ENCODE measurements at regions of chr2 and their contacts with region 1.

Region 1: GRCh38 chr2:64819774-64820696 is 166.3 kb upstream of the SERTAD2 start:
- DNase-seq: no peak
- ATAC-seq: peak in 1 of 8 donors; percentile 44
- H3K4me3 ChIP-seq: no peak overlapping the region
- H3K27ac ChIP-seq: peak overlapping the region in 4 of 10 donors; percentile 3 to 81 (median 20)
- H3K4me1 ChIP-seq: peaks cover 0 to 17% (median 0%) of the 10 kb centered on the region in 9 donors
- H3K27me3 ChIP-seq: peaks cover 0 to 6% (median 0%) of the 10 kb centered on the region in 7 donors
- CTCF ChIP-seq: no peak

Region 2: GRCh38 chr2:63676135-63676534 is 1143.9 kb before region 1 on chr2:
- intact Hi-C with region 1: no loop called
- DNase-seq: no peak
- ATAC-seq: peak in 5 of 8 donors; percentile 44 to 76 (median 62)
- H3K4me3 ChIP-seq: no peak overlapping the region
- H3K27ac ChIP-seq: peak overlapping the region in 3 of 10 donors; percentile 2 to 46 (median 12)
- H3K4me1 ChIP-seq: peaks cover 0 to 23% (median 0%) of the 10 kb centered on the region in 9 donors
- H3K27me3 ChIP-seq: no peaks in the 10 kb centered on the region
- CTCF ChIP-seq: no peak

Region 3: GRCh38 chr2:64787702-64788101 is 32.3 kb before region 1 on chr2:
- intact Hi-C with region 1: loop called in 1 of 10 experiments (anchors 5 kb)
- DNase-seq: no peak
- ATAC-seq: peak in 1 of 8 donors; percentile 41
- H3K4me3 ChIP-seq: no peak overlapping the region
- H3K27ac ChIP-seq: no peak overlapping the region
- H3K4me1 ChIP-seq: no peaks in the 10 kb centered on the region
- H3K27me3 ChIP-seq: no peaks in the 10 kb centered on the region
- CTCF ChIP-seq: no peak

Region 4: GRCh38 chr2:65240657-65241056 is 420.6 kb after region 1 on chr2:
- intact Hi-C with region 1: no loop called
- DNase-seq: no peak
- ATAC-seq: no peak
- H3K4me3 ChIP-seq: no peak overlapping the region
- H3K27ac ChIP-seq: no peak overlapping the region
- H3K4me1 ChIP-seq: peaks cover 0 to 26% (median 15%) of the 10 kb centered on the region in 9 donors
- H3K27me3 ChIP-seq: no peaks in the 10 kb centered on the region
- CTCF ChIP-seq: no peak

Region 5: DNA sequence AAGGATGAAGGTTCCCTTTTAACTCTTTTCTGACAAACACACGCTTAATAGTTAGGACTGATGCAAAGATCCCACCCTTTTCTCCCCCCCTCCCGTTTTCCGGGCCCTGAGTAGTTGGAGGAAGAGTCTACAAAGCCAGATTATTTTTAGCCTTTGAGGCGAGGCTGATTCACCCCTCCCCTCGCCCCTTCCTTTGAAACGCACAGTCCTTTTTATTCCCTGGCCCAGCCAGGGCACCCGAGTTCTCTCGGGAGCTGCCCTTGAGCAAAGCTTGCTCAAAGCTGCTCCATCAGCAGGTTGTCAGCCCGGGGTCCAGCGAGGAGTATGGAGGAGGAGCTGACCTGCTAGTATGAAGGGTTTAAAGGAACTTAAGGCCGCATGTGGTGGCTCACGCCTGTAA is 659.5 kb after region 1 on chr2:
- intact Hi-C with region 1: no loop called
- DNase-seq: peak; percentile 48 to 57
- ATAC-seq: peak; percentile 64 to 87 (median 82)
- H3K4me3 ChIP-seq: no peak overlapping the region
- H3K27ac ChIP-seq: peak overlapping the region in 4 of 10 donors; percentile 2 to 70 (median 50)
- H3K4me1 ChIP-seq: peaks cover 0 to 30% (median 7%) of the 10 kb centered on the region in 9 donors
- H3K27me3 ChIP-seq: no peaks in the 10 kb centered on the region
- CTCF ChIP-seq: no peak

Measured in heart right ventricle (tissue), 16 donors.